Activated T-helper 1 cell treated with anti-CD3 and anti-CD28 coated beads, Interleukin-12 subunit alpha, Interleukin-12 subunit beta, Interleukin-2, Interleukin-4 antibody, amounts not matched to agents 30 ng/mL and 10 ng/mL and 1 ng/mL, durations not matched to agents 14 hours and 24 hours and 36 hours (primary cell): ENCODE measurements at regions of chr19 and their contacts with region 1.

Region 1: DNA sequence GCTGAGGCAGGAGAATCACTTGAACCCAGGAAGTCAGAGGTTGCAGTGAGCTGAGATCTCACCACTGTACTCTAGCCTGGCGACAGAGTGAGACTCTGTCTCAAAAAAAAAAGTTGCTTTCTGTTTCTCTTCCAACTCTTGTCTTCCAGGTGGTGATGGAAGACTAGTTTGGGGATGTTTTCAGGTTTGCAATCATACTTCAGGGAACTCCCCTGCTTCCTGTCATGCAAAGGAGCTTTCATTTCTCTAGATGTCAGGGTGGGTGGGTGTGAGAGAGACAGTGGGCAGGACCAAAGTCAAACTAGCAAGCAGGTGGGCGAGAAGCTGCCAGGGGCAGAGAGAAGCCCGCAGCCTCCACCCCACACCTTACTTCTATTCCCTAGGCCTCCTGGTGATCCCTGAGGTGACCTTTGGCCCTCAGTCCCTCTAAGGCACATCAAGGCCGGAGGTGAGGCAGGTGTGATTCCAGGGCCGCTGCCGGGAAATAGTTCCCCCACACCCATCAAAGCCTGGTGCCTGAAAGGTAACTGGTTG is 25.7 kb downstream of the CCNE1 start:
- DNase-seq: peak; percentile 64
- H3K4me3 Mint-ChIP-seq: peak overlapping the region; percentile 77
- H3K27ac Mint-ChIP-seq: peak overlapping the region; percentile 99
- H3K4me1 Mint-ChIP-seq: peaks cover 68% of the 10 kb centered on the region
- H3K27me3 Mint-ChIP-seq: no peaks in the 10 kb centered on the region

Region 2: GRCh38 chr19:29587518-29587986 is 250.0 kb before region 1 on chr19:
- intact Hi-C with region 1: loop called (anchors 10 kb)
- DNase-seq: peak; percentile 80
- H3K4me3 Mint-ChIP-seq: no peak overlapping the region
- H3K27ac Mint-ChIP-seq: peak overlapping the region; percentile 72
- H3K4me1 Mint-ChIP-seq: peaks cover 58% of the 10 kb centered on the region
- H3K27me3 Mint-ChIP-seq: peaks cover 3% of the 10 kb centered on the region

Region 3: DNA sequence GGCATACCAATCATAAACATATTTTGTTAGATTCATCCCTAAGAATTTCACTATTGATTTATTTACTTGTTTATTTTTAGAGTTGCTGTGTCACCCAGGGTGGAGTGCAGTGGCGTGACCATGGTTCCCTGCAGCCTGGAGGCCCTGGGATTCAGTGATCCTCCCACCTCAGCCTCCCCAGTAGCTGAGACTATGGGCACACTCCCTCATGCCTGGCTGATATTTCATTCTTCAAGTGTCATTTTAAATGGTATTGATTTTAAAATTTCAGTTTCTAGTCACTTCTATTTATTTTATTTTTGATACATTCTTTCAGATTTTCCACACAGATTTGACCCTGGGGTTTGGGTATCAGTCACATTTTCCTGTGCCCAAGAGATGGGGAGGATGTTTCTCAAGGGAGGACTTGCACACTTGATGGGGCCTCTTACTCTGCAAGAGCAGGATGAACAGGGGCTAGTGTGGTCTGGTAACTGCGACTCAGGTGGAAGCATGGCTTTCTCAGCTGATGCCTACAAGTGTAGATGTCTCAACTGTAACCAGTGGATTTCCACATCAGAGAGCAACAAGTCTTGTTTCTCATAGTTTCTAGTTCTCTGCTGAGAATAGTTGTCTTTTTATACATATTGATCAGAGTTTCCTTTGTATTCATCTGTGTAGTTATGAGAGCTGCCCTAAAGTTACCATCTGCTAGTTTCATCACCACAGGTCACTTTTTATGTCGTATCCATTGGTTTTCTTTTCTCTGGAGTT is 14.4 kb after region 1 on chr19:
- intact Hi-C with region 1: loop called (anchors 1 kb)
- DNase-seq: no peak
- H3K4me3 Mint-ChIP-seq: no peak overlapping the region
- H3K27ac Mint-ChIP-seq: peak overlapping the region; percentile 80
- H3K4me1 Mint-ChIP-seq: peaks cover 16% of the 10 kb centered on the region
- H3K27me3 Mint-ChIP-seq: peaks cover 2% of the 10 kb centered on the region

Region 4: DNA sequence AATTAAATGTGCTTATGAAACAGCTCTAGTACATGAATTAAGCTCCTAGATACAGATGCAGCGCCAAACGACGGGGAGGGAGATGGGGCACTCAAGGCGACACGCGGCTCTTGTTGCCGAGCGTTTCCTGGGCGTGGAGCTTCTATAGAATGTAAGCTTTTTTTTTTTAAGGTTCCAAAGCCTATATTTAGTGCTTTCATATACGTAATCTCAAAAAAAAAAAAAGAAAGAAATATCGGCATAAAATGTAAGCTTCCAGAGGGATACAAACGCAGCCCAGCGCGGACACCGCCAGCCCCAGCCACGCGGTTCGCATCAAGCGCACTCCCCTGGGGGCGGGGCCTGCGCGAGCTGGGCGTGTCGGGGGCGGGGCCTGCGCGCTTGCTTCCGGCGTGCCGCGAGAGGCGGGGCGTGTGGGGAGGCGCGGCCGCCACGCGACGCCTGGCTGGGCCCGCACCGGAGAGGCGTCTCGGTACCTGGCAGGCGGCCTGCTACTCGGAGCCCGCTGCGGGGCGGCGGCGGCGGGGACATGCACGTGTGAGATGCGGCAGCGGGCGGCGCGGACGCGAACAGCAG is 104.4 kb after region 1 on chr19 and contains the start of gene URI1:
- intact Hi-C with region 1: loop called (anchors 1 kb)
- DNase-seq: peak; percentile 93
- H3K4me3 Mint-ChIP-seq: peak within 1 kb of the TSS; percentile 97
- H3K27ac Mint-ChIP-seq: peak within 1 kb of the TSS; percentile 96
- H3K4me1 Mint-ChIP-seq: peaks cover 48% of the 10 kb centered on the region
- H3K27me3 Mint-ChIP-seq: peaks cover 2% of the 10 kb centered on the region
- total RNA-seq, gene URI1: 62.9 and 67.6 TPM in 2 replicates

Region 5: GRCh38 chr19:30312582-30313352 is 475.3 kb after region 1 on chr19:
- intact Hi-C with region 1: no loop called
- DNase-seq: no peak
- H3K4me3 Mint-ChIP-seq: no peak overlapping the region
- H3K27ac Mint-ChIP-seq: no peak overlapping the region
- H3K4me1 Mint-ChIP-seq: no peaks in the 10 kb centered on the region
- H3K27me3 Mint-ChIP-seq: no peaks in the 10 kb centered on the region